T-cell (primary cell): ENCODE measurements at regions of chr2 and their contacts with region 1.

Region 1: DNA sequence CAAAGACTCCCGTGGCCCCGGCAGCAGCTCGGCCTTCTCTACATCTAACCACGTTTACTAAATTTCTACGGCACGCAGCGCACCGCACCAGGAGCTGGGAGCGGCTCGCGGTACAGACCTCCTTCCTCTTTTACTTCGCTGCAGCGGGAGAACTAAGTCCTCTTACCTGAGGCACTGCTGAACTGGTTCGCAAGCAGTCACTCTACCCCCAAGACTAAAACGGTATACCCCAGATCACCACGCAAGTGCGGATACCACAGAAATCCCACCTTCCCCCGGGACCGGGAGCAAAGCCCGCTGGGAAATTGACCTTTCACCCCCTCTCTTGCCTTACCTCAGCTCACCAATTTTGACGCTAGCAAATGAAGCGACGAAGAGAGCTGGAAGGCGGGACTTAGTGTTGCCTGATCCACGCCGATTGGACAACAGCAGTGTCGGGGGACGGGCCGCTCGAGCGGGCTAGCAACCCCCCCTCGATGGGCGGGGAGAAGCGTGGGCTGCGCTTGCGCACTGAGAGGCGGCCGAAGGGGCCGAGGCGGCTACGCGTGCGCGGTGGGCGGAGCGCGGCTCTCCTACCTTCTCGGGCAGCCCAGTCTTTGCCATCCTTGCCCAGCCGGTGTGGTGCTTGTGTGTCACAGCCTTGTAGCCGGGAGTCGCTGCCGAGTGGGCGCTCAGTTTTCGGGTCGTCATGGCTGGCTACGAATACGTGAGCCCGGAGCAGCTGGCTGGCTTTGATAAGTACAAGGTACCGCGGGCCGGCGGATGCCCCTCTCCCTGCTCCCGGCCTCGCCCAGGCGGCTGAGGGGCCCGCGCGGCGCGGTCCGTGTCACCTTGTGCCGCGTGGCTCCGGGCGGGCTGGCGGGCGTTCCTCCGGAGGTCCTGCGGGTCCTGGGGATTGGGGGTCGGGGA is at the start of gene SELENOI:
- DNase-seq: peak; percentile 96 to 100 (median 99)
- ATAC-seq: peak; percentile 93 to 98 (median 96)
- H3K4me3 ChIP-seq: peak within 1 kb of the TSS; percentile 84 to 91
- H3K4me3 Mint-ChIP-seq: peak within 1 kb of the TSS; percentile 97 to 99 (median 98)
- H3K27ac ChIP-seq: peak within 1 kb of the TSS; percentile 90
- H3K27ac Mint-ChIP-seq: peak within 1 kb of the TSS; percentile 98 to 99
- H3K4me1 ChIP-seq: peaks cover 17% of the 10 kb centered on the region in 2 experiments
- H3K4me1 Mint-ChIP-seq: peaks cover 40 to 46% (median 45%) of the 10 kb centered on the region in 3 donors
- H3K27me3 ChIP-seq: no peaks in the 10 kb centered on the region
- H3K27me3 Mint-ChIP-seq: no peaks in the 10 kb centered on the region
- total RNA-seq, gene SELENOI: 18.3 to 37.1 (median 22.0) TPM

Region 2: DNA sequence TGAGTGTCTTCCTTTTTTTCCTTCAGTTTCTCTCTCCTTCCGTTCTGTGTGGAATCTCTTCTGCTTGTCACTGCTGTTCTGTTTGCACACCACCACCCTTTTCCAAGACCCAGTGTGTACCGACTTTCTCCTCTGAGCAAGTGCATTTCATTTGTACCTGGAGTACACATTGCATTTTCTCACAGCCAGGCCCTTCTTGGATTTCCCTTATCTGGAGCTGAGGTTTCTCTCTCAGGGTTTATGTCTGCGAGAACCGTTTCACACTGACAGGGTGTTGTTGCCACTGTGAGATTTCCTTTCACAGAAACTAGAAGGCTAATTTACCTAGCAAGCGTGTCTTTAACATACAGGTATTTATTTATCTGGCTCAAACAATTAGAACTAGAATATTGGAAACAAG is 1828.6 kb before region 1 on chr2:
- CTCF ChIA-PET with region 1: no interaction called
- POLR2A ChIA-PET with region 1: interaction called in 1 of 2 experiments, 12 read pairs
- DNase-seq: peak in 3 of 35 experiments; percentile 2 to 29 (median 3)
- ATAC-seq: peak in 1 of 4 experiments; percentile 34
- H3K4me3 ChIP-seq: no peak overlapping the region
- H3K4me3 Mint-ChIP-seq: peak overlapping the region in 2 of 3 donors; percentile 40 to 51
- H3K27ac ChIP-seq: no peak overlapping the region
- H3K27ac Mint-ChIP-seq: no peak overlapping the region
- H3K4me1 ChIP-seq: peaks cover 4 to 14% of the 10 kb centered on the region in 2 experiments
- H3K4me1 Mint-ChIP-seq: peaks cover 60 to 67% (median 67%) of the 10 kb centered on the region in 3 donors
- H3K27me3 ChIP-seq: no peaks in the 10 kb centered on the region
- H3K27me3 Mint-ChIP-seq: no peaks in the 10 kb centered on the region

Region 3: DNA sequence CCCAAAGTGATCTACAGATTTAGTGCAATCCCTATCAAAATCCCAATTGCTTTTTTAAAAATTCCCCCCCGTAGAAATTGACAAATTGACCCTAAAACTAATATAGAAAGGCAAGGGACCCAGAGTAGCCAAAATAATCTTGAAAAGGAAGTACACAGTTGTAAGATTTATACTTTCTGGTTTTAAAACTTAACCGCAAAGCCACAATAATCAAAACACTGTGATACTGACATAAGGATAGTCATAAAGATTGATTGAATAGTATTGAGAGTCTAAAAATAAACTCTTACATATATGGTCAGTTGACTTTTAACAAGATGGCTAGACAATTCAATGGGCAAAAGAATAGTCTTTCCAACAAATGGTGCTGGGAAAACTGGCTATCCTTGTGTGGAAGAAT is 231.6 kb before region 1 on chr2:
- CTCF ChIA-PET with region 1: no interaction called
- POLR2A ChIA-PET with region 1: interaction called in 1 of 2 experiments, 10 read pairs
- DNase-seq: no peak
- ATAC-seq: no peak
- H3K4me3 ChIP-seq: no peak overlapping the region
- H3K4me3 Mint-ChIP-seq: no peak overlapping the region
- H3K27ac ChIP-seq: no peak overlapping the region
- H3K27ac Mint-ChIP-seq: peak overlapping the region; percentile 28 to 48
- H3K4me1 ChIP-seq: no peaks in the 10 kb centered on the region
- H3K4me1 Mint-ChIP-seq: peaks cover 19 to 30% (median 21%) of the 10 kb centered on the region in 3 donors
- H3K27me3 ChIP-seq: no peaks in the 10 kb centered on the region
- H3K27me3 Mint-ChIP-seq: no peaks in the 10 kb centered on the region

Region 4: DNA sequence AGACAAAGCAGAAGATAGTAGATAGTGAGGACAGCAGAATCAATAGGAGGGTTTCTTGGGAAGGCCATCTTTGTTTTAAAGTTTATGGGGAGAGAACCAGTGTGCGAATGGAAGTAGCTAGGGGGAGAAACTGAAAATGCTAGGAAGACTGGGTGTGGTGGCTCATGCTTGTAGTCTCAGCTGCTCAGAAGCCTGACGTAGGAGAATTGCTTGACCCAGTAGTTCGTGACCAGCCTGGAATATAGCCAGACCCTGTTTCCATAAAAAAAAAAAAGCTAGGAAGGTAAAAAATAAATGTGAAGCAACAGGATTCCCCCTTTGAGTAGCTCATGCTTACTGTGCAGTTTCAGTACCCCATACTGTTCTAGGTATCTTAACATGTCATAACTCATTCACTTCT is 36.8 kb after region 1 on chr2:
- CTCF ChIA-PET with region 1: interaction called in 1 of 2 experiments, 3 read pairs
- POLR2A ChIA-PET with region 1: interaction called, 3 to 11 read pairs
- DNase-seq: no peak
- ATAC-seq: no peak
- H3K4me3 ChIP-seq: no peak overlapping the region
- H3K4me3 Mint-ChIP-seq: no peak overlapping the region
- H3K27ac ChIP-seq: no peak overlapping the region
- H3K27ac Mint-ChIP-seq: no peak overlapping the region
- H3K4me1 ChIP-seq: no peaks in the 10 kb centered on the region
- H3K4me1 Mint-ChIP-seq: peaks cover 3 to 7% (median 6%) of the 10 kb centered on the region in 3 donors
- H3K27me3 ChIP-seq: no peaks in the 10 kb centered on the region
- H3K27me3 Mint-ChIP-seq: no peaks in the 10 kb centered on the region

Region 5: DNA sequence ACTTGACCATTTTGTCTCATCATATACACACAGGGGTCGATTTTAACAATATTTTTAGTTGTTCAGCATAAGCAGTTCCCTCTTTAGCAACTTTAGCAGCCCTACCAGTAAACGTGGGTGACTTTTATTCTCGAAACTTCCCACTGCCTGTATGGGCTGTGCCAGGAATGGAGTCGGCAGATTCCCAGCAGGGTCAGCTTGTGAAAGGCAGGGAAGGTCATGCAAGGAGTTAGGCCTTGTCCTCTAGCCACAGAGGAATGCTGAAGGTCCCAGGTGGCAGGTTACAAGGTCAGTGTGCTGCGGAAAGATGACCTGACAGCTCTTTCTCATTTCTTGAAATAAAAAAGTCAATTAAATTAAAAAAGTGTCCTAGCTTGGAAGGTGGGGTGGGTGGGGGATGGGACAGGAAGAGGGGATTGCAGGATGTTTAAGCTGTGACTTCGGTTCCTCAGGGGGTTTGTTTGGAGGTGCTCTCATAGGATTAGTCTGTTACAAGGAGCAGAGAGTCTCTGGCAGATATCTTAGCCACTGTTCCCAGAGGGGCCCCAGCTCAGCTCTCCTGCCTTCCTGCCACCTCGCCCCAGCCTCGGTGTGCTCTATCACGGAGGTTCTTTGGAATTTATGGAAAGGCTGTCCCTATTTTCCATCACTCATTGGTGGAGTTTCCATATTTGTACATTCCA is 77.3 kb after region 1 on chr2:
- CTCF ChIA-PET with region 1: no interaction called
- POLR2A ChIA-PET with region 1: no interaction called
- DNase-seq: no peak
- ATAC-seq: no peak
- H3K4me3 ChIP-seq: no peak overlapping the region
- H3K4me3 Mint-ChIP-seq: no peak overlapping the region
- H3K27ac ChIP-seq: no peak overlapping the region
- H3K27ac Mint-ChIP-seq: no peak overlapping the region
- H3K4me1 ChIP-seq: no peaks in the 10 kb centered on the region
- H3K4me1 Mint-ChIP-seq: no peaks in the 10 kb centered on the region
- H3K27me3 ChIP-seq: peaks cover 0 to 2% of the 10 kb centered on the region in 2 experiments
- H3K27me3 Mint-ChIP-seq: peaks cover 0 to 3% of the 10 kb centered on the region in 2 donors